ENCODE measurements at regions of chr12 and their contacts with region 1.

Region 1: DNA sequence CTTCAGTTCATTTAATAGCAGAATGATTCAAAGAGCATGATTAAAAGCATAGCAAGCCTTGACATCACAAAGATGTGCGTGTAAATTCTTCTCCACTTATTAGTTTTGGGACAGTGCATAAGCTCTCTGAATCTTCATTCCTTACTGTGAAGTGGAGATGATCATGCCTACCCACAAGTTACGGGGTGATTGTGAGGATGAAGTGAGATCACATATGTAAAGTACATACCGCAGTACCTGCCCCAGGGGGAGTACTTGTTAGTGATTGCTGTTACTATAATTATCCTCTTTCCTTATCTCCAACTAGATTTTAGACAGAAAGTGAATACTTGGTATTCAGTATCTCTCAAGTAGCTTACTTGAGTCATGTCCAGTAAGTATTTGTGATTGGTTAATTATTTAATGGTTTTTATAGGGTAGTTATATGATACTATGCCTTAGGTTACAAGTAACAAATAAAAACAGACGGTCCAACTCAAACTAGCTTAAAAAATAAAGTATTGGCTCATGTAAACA is 6.0 kb downstream of the RAD9B start:
- DNase-seq: no peak
- H3K4me3 Mint-ChIP-seq: no peak overlapping the region
- H3K27ac Mint-ChIP-seq: no peak overlapping the region
- H3K4me1 Mint-ChIP-seq: no peaks in the 10 kb centered on the region
- H3K27me3 Mint-ChIP-seq: peaks cover 15% of the 10 kb centered on the region

Region 2: DNA sequence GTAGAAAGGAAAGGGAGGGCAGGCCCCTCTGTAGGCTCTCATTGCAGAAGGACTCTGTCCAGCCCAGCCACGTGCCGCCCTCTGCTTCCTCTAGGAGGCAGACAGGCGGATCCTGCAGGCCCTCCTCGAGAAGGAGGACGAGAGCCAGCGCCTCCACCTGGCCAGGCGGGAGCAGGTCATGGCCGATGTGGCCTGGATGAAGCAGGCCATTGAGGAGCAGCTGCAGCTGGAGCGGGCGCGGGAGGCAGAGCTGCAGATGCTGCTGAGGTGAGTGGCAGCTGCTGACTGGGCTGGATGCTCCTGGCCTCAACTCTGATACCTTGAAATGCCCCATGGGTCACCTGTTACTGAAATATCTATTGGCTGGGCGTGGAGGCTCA is 597.2 kb before region 1 on chr12:
- intact Hi-C with region 1: no loop called
- DNase-seq: no peak
- H3K4me3 Mint-ChIP-seq: no peak overlapping the region
- H3K27ac Mint-ChIP-seq: no peak overlapping the region
- H3K4me1 Mint-ChIP-seq: no peaks in the 10 kb centered on the region
- H3K27me3 Mint-ChIP-seq: no peaks in the 10 kb centered on the region

Region 3: DNA sequence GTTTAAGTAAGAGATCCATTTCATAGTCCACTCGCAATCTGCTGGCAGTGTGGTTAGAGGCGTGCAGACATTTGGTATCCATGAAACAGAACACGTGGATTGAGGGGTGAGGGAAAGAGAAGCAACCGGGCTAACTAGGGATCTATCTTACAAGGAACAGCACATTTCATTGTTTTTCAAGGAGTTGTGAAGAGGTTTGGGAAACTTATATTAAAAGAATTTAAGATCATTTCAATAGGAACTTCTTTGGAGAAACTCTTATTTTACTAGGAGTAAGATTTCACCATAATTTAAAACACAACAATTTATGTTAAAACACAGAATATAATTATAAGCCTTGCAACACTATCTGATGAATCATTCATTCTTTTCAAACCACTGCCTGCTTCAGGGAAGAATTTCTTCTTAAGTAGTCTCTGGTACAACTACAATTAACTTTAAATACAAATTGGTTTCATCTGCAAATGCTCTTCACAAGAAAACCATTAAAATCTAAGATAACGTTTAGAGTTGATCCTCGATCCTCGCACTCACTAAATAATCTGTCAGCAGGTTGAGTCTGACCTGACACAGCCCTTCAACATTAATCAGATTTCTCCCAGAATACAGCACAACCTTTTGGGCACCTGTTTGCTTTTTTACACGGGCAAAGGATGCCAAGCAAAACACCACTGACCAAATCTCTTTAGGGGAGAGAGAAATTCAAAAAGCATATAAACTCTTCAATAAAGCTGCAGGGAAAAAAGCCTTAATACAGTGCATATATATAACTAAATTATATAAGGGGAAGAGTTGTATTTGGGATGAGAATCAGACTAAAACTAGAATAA is 47.7 kb after region 1 on chr12:
- intact Hi-C with region 1: loop called (anchors 1 kb)
- DNase-seq: no peak
- H3K4me3 Mint-ChIP-seq: no peak overlapping the region
- H3K27ac Mint-ChIP-seq: peak overlapping the region; percentile 57
- H3K4me1 Mint-ChIP-seq: peaks cover 58% of the 10 kb centered on the region
- H3K27me3 Mint-ChIP-seq: no peaks in the 10 kb centered on the region

Region 4: GRCh38 chr12:110590806-110591326 is 82.7 kb after region 1 on chr12:
- intact Hi-C with region 1: no loop called
- DNase-seq: peak; percentile 24
- H3K4me3 Mint-ChIP-seq: peak overlapping the region; percentile 11
- H3K27ac Mint-ChIP-seq: peak overlapping the region; percentile 87
- H3K4me1 Mint-ChIP-seq: peaks cover 25% of the 10 kb centered on the region
- H3K27me3 Mint-ChIP-seq: no peaks in the 10 kb centered on the region